Posterior cingulate gyrus (tissue), 11 donors: ENCODE measurements at regions of chr13 and their contacts with region 1.

Region 1: GRCh38 chr13:46321494-46322225 is 65.4 kb downstream of the RUBCNL start:
- DNase-seq: peak in 7 of 10 donors; percentile 35 to 92 (median 51)

Region 2: DNA sequence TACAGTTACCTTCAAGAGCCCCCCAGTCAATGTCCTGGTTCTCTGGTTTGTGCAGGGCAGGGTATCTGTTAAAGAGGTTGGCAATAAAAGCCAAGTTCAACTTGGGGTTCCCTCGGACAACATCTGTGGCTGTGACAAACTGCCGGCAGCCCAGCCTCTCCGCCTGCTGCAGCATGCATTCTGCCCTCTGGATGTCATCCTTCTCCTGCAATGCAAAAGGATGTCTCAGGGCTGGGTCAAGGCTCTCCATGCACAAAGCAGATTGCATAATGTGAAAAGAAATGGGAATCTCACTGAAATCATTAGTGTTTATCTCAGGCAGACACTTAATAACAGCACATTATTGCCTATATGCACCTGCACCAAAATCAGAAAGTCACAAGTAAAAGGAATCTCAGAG is 174.8 kb before region 1 on chr13:
- intact Hi-C with region 1: loop called (anchors 10 kb)
- DNase-seq: peak in 7 of 10 donors; percentile 13 to 86 (median 40)

Region 3: GRCh38 chr13:46354156-46355091 is 32.8 kb after region 1 on chr13:
- intact Hi-C with region 1: no loop called
- DNase-seq: no peak